ENCODE measurements at regions of chr6 and their contacts with region 1.

Region 1: DNA sequence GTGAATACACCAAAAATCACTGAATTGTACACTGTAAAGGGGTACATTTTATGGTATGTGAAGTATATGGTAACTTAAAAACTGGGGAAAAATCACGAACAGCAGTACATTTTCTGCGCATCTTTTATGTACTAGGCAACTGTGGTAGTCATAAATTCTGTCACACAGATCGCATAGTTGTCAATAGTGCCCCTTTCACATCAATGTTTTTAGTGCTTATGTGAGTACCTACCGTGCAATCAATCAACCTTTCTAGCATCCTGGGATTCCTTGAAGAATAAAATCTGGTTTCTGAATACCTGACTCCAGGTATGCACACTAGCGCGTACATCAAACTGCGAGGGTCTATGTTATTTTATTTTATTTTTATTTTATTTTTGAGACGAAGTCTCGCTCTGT is 637 bp upstream of the RPF2 start:
- DNase-seq: no peak
- H3K4me3 Mint-ChIP-seq: peak overlapping the region; percentile 98
- H3K27ac Mint-ChIP-seq: peak overlapping the region; percentile 97
- H3K4me1 Mint-ChIP-seq: peaks cover 50% of the 10 kb centered on the region
- H3K27me3 Mint-ChIP-seq: no peaks in the 10 kb centered on the region

Region 2: DNA sequence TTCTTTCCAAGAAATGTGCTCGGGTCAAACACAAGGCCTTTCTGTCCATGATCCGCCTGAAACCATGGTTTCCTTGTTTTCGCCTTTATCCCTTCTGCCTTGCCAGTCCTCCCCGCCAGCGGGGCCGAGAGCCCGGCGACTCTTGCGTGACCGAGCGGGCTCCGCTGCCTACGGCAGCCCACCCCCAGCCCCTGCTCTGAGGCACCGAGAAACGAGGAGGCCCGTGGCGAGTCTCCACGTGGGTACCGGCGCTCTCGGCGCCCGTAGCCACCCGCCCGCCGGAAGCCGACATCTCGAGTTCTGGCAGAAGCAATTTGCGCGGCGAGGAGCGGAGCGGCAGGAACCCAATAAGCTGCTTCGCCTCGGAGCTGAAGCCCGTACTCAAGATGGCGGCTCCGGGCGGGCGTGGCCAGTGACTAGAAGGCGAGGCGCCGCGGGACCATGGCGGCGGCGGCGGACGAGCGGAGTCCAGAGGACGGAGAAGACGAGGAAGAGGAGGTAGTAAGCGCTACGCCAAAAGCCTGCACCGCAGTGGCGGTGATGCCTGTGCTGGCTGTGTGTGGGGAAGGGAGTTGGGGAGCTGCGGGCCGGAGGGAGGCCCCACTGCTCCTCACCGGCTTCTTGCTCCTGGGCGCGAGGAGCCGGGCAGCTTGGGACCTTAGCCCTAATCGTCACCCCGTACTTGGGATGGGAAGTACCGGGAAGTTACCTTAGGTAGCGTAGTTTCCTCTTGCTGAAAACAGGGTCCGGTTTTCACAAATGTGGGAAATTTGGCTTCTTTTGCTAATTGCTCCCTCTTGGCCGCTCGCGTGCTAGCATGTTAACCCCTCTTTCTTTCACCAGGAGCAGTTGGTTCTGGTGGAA is 22.6 kb before region 1 on chr6 and contains the start of gene GTF3C6:
- CTCF ChIA-PET with region 1: interaction called, 5 read pairs
- POLR2A ChIA-PET with region 1: interaction called, 15 read pairs
- intact Hi-C with region 1: loop called (anchors 1 kb)
- DNase-seq: peak; percentile 95
- H3K4me3 Mint-ChIP-seq: peak within 1 kb of the TSS; percentile 97
- H3K27ac Mint-ChIP-seq: peak within 1 kb of the TSS; percentile 98
- H3K4me1 Mint-ChIP-seq: peaks cover 15% of the 10 kb centered on the region
- H3K27me3 Mint-ChIP-seq: peaks cover 1% of the 10 kb centered on the region
- total RNA-seq, gene GTF3C6: 97.1 to 97.7 TPM

Region 3: GRCh38 chr6:111087106-111087835 is 106.1 kb after region 1 on chr6 and contains the start of gene SLC16A10:
- CTCF ChIA-PET with region 1: no interaction called
- POLR2A ChIA-PET with region 1: no interaction called
- intact Hi-C with region 1: no loop called
- DNase-seq: peak; percentile 79
- H3K4me3 Mint-ChIP-seq: peak within 1 kb of the TSS; percentile 77
- H3K27ac Mint-ChIP-seq: peak within 1 kb of the TSS; percentile 8
- H3K4me1 Mint-ChIP-seq: peaks cover 28% of the 10 kb centered on the region
- H3K27me3 Mint-ChIP-seq: peaks cover 11% of the 10 kb centered on the region
- total RNA-seq, gene SLC16A10: 3.4 to 3.6 TPM